Heart left ventricle (tissue), 16 donors: ENCODE measurements at regions of chr7 and their contacts with region 1.

Region 1: DNA sequence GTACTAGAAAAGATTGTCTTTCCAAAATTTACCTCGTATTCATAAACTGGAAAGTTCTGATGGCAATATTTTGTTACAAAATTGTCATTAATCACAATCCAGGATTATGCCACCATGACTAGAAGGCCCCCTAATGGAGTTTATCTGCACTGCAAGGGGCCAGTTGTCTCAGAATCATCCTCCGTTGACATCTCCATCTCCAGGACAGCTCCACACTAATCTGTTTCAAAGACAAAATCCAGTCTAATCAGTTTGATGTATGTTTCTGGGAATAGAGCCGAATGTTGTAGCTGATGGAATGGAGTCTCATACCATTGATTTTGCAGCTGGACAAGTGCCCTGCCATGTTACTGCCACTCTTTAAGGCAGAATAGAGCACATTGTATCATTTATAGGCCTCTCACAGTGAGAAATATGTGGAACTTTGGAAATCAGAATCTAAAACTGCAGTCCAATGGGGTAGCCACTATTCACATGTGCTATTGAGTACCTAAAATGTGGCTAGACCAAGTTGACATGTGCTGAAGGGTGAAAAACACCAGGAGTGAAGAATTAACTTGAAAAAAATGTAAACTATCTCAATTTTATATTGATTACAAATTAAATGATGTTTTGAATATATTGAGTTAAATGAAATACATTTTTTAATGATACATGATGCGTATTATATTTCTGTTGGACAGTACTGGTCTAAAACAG is 38.3 kb upstream of the TOMM7 start:
- DNase-seq: no peak
- ATAC-seq: no peak
- H3K4me3 ChIP-seq: no peak overlapping the region
- H3K27ac ChIP-seq: peak overlapping the region in 7 of 12 donors; percentile 27 to 97 (median 47)
- H3K4me1 ChIP-seq: peaks cover 0 to 37% (median 20%) of the 10 kb centered on the region in 12 donors
- H3K27me3 ChIP-seq: no peaks in the 10 kb centered on the region
- CTCF ChIP-seq: peak; percentile 22 to 63 (median 48)
- POLR2A ChIP-seq: no peak

Region 2: DNA sequence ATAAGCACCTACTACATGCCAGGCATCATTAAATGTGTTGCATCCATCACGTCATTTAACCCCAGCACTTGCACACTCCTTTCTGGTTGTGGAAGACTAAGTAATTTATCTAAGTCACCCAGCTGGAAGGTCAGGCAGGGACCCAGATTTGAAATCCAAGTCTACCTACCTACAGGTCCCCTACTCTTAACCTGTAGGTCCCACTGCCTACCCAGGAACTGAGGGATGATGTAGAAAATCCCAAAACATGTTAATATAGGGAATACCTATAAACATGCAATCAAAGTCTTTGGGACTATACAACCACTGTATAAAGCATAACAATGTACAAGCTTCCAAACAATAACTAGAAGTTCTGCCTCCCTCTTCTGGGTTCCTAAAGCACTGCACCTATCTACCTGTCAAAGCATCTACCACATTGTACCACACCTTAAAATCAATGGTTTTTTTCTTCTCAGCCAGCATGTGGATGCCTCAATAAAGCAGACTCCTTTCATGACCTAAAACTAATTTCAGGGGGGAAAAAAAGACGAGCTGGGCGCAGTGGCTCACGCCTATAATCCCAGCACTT is 128.3 kb before region 1 on chr7:
- intact Hi-C with region 1: loop called in 1 of 10 experiments (anchors 5 kb)
- DNase-seq: no peak
- ATAC-seq: no peak
- H3K4me3 ChIP-seq: no peak overlapping the region
- H3K27ac ChIP-seq: no peak overlapping the region
- H3K4me1 ChIP-seq: peaks cover 0 to 17% (median 3%) of the 10 kb centered on the region in 12 donors
- H3K27me3 ChIP-seq: peaks cover 0 to 2% (median 0%) of the 10 kb centered on the region in 9 donors
- CTCF ChIP-seq: peak in 8 of 12 donors; percentile 8 to 34 (median 22)
- POLR2A ChIP-seq: no peak